ENCODE measurements at regions of chr6 and their contacts with region 1.

Region 1: DNA sequence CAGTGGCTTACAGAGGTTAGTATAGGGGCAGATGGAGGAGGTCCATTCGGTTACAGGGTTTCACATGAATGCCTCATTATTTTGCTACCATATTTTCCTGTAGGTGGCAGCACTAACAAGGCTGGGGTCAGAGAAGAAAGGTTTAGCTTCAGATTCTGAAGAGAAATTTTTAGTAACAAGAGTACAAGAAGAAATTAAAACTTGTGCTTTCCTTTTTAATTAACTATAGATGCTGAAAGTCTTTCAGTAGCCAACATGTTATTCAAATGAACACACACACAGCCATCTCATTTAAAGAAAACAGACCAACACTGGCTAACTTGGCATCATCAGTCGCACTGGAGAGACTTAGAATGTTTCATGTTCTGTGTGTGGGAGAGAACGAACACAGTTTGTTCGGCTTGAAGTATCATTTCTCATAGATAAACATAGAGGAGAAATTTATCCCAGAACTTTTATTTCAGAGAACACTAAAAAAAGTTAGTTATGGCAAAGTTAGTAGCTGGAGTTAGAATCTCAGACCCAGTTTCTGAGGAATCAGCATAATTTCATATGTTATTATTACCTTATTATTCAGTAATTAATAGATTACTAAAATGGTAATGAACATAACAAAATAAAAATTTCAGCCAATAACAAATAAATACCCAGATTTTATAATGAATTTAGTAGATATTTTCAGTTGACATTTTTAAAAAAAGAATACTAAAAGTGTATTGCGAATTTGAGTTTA is 314.0 kb upstream of the RSPO3 start:
- DNase-seq: peak; percentile 32
- H3K4me3 Mint-ChIP-seq: no peak overlapping the region
- H3K27ac Mint-ChIP-seq: no peak overlapping the region
- H3K4me1 Mint-ChIP-seq: no peaks in the 10 kb centered on the region
- H3K27me3 Mint-ChIP-seq: no peaks in the 10 kb centered on the region
- CTCF ChIP-seq: no peak

Region 2: DNA sequence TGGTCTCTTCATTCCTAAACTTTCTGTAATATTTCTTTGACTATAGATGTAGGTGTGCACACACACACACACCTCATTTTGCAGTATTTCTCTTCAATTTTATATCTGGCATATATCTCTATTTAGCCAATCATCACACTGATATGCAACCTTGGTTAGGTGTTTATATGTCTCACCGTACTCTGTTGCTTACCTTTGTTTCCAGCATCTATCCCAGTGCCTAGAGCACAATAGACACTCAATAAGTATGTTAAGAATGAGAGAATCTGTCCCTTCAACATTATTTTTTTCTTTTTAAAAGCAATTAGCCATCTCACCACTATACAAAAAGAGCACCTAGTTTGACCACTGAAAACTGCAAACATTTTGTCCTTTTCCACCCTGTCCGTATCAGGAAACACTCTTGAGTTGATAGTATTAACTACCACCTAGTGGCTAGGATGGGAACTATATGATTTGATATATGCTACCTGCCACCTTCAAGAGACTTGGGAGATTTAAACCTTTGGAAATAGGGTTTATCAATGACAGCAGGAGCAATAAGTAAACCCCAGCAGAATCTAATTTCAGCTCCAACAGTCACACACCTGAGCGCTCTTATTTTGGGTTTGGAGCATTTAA is 265.3 kb after region 1 on chr6:
- CTCF ChIA-PET with region 1: no interaction called
- intact Hi-C with region 1: loop called (anchors 2 kb)
- DNase-seq: no peak
- H3K4me3 Mint-ChIP-seq: no peak overlapping the region
- H3K27ac Mint-ChIP-seq: no peak overlapping the region
- H3K4me1 Mint-ChIP-seq: no peaks in the 10 kb centered on the region
- H3K27me3 Mint-ChIP-seq: no peaks in the 10 kb centered on the region
- CTCF ChIP-seq: peak; percentile 25

Region 3: DNA sequence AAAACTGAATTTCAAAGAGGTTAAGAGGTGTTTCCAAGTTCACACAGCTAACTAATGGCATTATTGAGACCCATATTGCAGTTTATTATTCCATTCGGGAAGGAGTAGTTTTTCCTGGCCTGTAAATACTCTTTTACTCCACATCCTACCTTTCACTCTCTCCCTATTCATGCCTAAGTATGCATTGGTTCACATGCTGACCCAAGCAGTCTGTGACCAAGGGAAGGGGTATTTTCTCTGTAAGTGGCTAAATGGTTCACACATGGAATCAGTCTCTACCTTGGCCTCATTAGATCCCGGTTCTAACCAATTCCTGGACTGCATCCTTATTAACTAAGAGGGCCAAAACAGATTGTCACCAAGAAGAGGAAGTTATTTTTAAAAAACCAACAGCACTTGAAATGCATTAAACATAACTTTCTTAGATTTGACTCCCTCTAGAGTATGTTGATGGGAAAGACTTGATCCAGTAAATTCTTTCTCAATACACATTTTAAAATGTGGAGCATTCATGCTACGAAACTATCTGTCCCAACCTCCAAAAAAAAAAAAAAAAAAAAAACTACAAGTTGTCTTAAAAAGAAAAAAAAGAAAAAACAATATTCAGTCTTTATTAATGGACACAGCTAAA is 296.1 kb after region 1 on chr6:
- CTCF ChIA-PET with region 1: interaction called, 4 read pairs
- intact Hi-C with region 1: loop called (anchors 10 kb)
- DNase-seq: no peak
- H3K4me3 Mint-ChIP-seq: no peak overlapping the region
- H3K27ac Mint-ChIP-seq: no peak overlapping the region
- H3K4me1 Mint-ChIP-seq: no peaks in the 10 kb centered on the region
- H3K27me3 Mint-ChIP-seq: no peaks in the 10 kb centered on the region
- CTCF ChIP-seq: no peak

Measured in Calu3 (cell line).